ENCODE measurements at regions of chr14 and their contacts with region 1.

Region 1: GRCh38 chr14:19930617-19931016 is at the start of gene OR4K1:
- DNase-seq: no peak
- ATAC-seq: no peak
- H3K4me3 ChIP-seq: no peak within 1 kb of the TSS
- H3K27ac ChIP-seq: no peak within 1 kb of the TSS
- H3K4me1 ChIP-seq: no peaks in the 10 kb centered on the region
- H3K27me3 ChIP-seq: no peaks in the 10 kb centered on the region
- CTCF ChIP-seq: no peak
- POLR2A ChIP-seq: no peak
- RAD21 ChIP-seq: no peak
- total RNA-seq, gene OR4K1: not detected

Region 2: DNA sequence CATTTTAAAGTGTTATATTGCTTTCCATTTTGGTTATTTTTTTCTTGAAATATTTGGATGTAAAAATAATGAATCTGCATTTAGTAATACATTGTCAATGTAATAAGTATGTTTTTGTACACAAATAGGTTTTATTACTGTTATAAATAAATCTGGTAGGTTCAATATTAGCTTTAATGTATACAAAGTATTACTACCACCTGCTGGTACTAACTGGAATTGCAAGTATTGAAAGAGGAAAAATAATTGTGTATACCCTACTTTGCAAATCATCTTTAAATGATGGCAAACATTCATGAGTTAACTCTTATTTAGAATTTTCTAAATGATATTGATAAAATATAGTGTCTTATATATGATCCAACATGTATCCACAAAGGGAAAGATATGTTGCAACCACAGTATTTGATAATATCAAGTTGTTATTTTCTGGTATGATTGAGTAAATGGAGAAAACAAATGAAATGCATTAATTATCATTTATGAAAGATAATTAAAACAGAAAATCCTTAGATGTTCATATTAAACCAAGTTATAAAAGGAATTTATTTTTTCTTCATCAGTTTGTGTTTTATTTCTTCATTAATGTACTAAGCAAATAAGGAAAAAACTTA is 52.5 kb before region 1 on chr14:
- CTCF ChIA-PET with region 1: no interaction called
- POLR2A ChIA-PET with region 1: no interaction called
- RAD21 ChIA-PET with region 1: no interaction called
- intact Hi-C with region 1: loop called (anchors 10 kb)
- DNase-seq: peak; percentile 4
- ATAC-seq: no peak
- H3K4me3 ChIP-seq: no peak overlapping the region
- H3K27ac ChIP-seq: no peak overlapping the region
- H3K4me1 ChIP-seq: no peaks in the 10 kb centered on the region; a peak in 1 of 4 replicates
- H3K27me3 ChIP-seq: no peaks in the 10 kb centered on the region
- CTCF ChIP-seq: peak in 2 of 3 experiments; percentile 51 to 78; a peak in 4 of 6 replicates
- POLR2A ChIP-seq: no peak
- RAD21 ChIP-seq: 0 out of 2 replicates have a peak, but pooled peaks have one; percentile 5